ENCODE measurements at regions of chr2 and their contacts with region 1.

Region 1: DNA sequence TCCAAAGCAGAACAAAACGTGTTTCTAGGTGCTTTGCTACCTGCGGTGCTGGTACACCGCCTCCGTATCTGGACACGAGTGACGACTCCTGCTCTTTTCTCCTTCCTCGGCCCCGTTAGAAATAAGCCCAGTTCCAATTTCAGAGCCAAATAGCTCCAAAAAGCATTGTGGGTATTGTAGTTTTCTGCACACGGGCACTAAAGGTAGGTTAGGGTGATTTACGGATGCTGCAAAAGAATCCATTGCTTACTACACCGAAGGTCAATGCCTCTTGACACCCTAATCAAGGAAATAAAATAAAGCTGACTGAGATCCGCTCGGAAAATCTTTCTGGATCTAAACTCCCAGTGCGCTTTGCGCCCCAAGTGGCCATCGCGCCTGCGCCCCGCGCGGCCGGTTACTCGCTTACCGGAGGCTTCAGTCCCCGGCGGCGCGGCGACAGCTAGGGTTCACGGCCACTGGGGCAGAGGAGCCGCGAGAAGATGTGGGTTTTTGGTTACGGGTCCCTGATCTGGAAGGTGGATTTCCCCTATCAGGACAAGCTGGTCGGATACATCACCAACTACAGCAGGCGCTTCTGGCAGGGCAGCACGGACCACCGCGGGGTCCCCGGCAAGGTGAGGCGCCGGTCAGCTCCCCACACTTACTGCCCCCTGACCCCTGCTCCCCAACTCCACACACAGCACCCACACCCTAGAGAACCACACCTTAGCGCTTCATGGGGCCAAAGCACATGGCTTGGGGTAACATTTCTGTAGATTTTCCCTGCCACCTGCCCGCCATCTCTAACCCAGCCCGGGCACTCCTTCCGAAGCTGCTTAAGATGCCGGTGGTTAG is at the start of gene CHAC2:
- DNase-seq: peak; percentile 82
- ATAC-seq: peak; percentile 92
- H3K4me3 Mint-ChIP-seq: peak within 1 kb of the TSS; percentile 95
- H3K27ac Mint-ChIP-seq: peak within 1 kb of the TSS; percentile 99
- H3K4me1 Mint-ChIP-seq: peaks cover 21% of the 10 kb centered on the region
- H3K27me3 Mint-ChIP-seq: no peaks in the 10 kb centered on the region
- CTCF ChIP-seq: no peak
- total RNA-seq, gene CHAC2: 7.0 and 7.6 TPM in 2 replicates

Region 2: GRCh38 chr2:53445386-53446072 is 322.1 kb before region 1 on chr2:
- CTCF ChIA-PET with region 1: no interaction called
- POLR2A ChIA-PET with region 1: no interaction called
- intact Hi-C with region 1: no loop called
- DNase-seq: no peak
- ATAC-seq: no peak
- H3K4me3 Mint-ChIP-seq: no peak overlapping the region
- H3K27ac Mint-ChIP-seq: no peak overlapping the region
- H3K4me1 Mint-ChIP-seq: no peaks in the 10 kb centered on the region
- H3K27me3 Mint-ChIP-seq: peaks cover 2% of the 10 kb centered on the region
- CTCF ChIP-seq: no peak

Region 3: GRCh38 chr2:53786705-53787612 is 19.3 kb after region 1 on chr2 and contains the starts of genes ASB3 and ERLEC1:
- CTCF ChIA-PET with region 1: interaction called, 3 read pairs
- POLR2A ChIA-PET with region 1: interaction called, 81 read pairs
- intact Hi-C with region 1: loop called (anchors 1 kb)
- DNase-seq: peak; percentile 82
- ATAC-seq: peak; percentile 93
- H3K4me3 Mint-ChIP-seq: peak within 1 kb of the TSS; percentile 91
- H3K27ac Mint-ChIP-seq: peak within 1 kb of the TSS; percentile 94
- H3K4me1 Mint-ChIP-seq: peaks cover 50% of the 10 kb centered on the region
- H3K27me3 Mint-ChIP-seq: no peaks in the 10 kb centered on the region
- CTCF ChIP-seq: no peak
- total RNA-seq, gene ASB3: 16.3 and 22.8 TPM in 2 replicates
- total RNA-seq, gene ERLEC1: 16.8 and 18.2 TPM in 2 replicates

Region 4: GRCh38 chr2:55282110-55282917 is 1514.7 kb after region 1 on chr2:
- CTCF ChIA-PET with region 1: no interaction called
- POLR2A ChIA-PET with region 1: no interaction called
- intact Hi-C with region 1: loop called (anchors 5 kb)
- DNase-seq: peak; percentile 83
- ATAC-seq: peak; percentile 99
- H3K4me3 Mint-ChIP-seq: peak overlapping the region; percentile 88
- H3K27ac Mint-ChIP-seq: peak overlapping the region; percentile 93
- H3K4me1 Mint-ChIP-seq: peaks cover 28% of the 10 kb centered on the region
- H3K27me3 Mint-ChIP-seq: no peaks in the 10 kb centered on the region
- CTCF ChIP-seq: no peak

Measured in activated B cell treated with CpG ODN at 0.5 μM for 24 hours (primary cell).